ENCODE measurements at regions of chr15 and their contacts with region 1.

Region 1: GRCh38 chr15:41774062-41774881 is at the start of gene MAPKBP1:
- DNase-seq: peak; percentile 94 to 97
- ATAC-seq: peak; percentile 96 to 98
- H3K4me3 ChIP-seq: peak within 1 kb of the TSS; percentile 71 to 91 (median 83)
- H3K27ac ChIP-seq: peak within 1 kb of the TSS; percentile 83 to 87 (median 86)
- H3K4me1 ChIP-seq: peaks cover 28 to 36% of the 10 kb centered on the region in 2 donors
- H3K27me3 ChIP-seq: no peaks in the 10 kb centered on the region
- CTCF ChIP-seq: peak; percentile 38 to 76 (median 60)
- POLR2A ChIP-seq: peak; percentile 49 to 51
- total RNA-seq, gene MAPKBP1: 4.2 to 8.4 (median 5.4) TPM

Region 2: GRCh38 chr15:41230650-41231533 is 543.4 kb before region 1 on chr15 and contains the starts of genes CHP1 and EXD1:
- in situ Hi-C with region 1: no loop called
- intact Hi-C with region 1: loop called (anchors 2 kb)
- DNase-seq: peak; percentile 98 to 99
- ATAC-seq: peak; percentile 91 to 94
- H3K4me3 ChIP-seq: peak within 1 kb of the TSS; percentile 73 to 91 (median 86)
- H3K27ac ChIP-seq: peak within 1 kb of the TSS; percentile 91 to 97 (median 94)
- H3K4me1 ChIP-seq: peaks cover 31 to 35% of the 10 kb centered on the region in 2 donors
- H3K27me3 ChIP-seq: no peaks in the 10 kb centered on the region
- CTCF ChIP-seq: peak; percentile 91 to 98 (median 93)
- POLR2A ChIP-seq: peak; percentile 88 to 90
- total RNA-seq, gene CHP1: 208 to 293 (median 266) TPM
- total RNA-seq, gene EXD1: not detected

Region 3: GRCh38 chr15:41790756-41791546 is 16.7 kb after region 1 on chr15:
- in situ Hi-C with region 1: no loop called
- intact Hi-C with region 1: loop called (anchors 2 kb)
- DNase-seq: no peak
- ATAC-seq: peak; percentile 20 to 32
- H3K4me3 ChIP-seq: no peak overlapping the region
- H3K27ac ChIP-seq: peak overlapping the region; percentile 47 to 77 (median 66)
- H3K4me1 ChIP-seq: peaks cover 47 to 48% of the 10 kb centered on the region in 2 donors
- H3K27me3 ChIP-seq: no peaks in the 10 kb centered on the region
- CTCF ChIP-seq: no peak
- POLR2A ChIP-seq: no peak

Region 4: DNA sequence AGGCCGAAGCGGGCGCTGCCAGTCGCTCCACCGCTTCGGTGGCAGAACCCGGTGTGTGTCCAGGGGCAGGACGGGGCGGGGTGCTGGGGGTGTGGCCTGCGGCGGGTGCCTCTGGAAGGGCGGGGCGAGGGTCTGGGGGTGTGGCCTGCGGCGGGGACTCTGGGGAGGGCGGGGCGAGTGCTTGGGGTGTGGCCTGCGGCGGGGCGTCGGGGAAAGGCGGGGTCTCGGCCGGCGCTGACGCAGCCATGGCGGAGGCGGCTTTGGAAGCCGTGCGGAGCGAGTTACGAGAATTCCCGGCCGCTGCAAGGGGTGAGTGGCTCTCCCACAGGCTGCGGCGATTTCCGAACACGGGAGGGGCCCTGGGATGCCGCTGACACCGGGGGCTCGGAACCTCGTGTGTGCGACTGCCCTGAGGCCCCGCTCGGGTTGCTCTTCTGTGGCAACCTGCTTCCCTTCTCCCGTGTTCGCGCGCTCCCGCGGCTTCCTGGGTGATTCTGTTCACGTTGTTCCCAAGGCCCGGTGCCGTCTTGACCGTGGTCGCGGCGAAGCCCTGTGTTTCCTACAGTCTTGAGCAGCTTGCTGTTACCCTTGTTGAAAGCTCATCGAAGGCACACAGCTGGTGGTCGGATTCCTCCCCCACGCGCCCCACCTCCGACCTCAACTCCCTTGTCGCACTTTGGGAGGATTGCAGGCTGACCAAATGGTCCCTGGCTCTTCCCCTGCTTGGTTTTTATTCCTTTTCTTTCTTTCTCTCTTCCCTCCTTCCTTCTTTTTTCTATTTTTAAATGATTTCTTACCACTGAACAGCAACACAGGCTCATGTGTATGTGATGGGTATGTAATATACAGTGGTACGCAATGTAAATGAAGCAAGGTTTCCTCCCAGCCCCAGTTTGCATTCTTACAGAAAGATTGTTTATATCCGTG is 53.9 kb after region 1 on chr15 and contains the start of gene JMJD7:
- in situ Hi-C with region 1: no loop called
- intact Hi-C with region 1: loop called (anchors 5 kb)
- DNase-seq: peak; percentile 88 to 91
- ATAC-seq: peak; percentile 89
- H3K4me3 ChIP-seq: peak within 1 kb of the TSS; percentile 63 to 90 (median 68)
- H3K27ac ChIP-seq: peak within 1 kb of the TSS; percentile 82 to 90 (median 87)
- H3K4me1 ChIP-seq: peaks cover 15 to 18% of the 10 kb centered on the region in 2 donors
- H3K27me3 ChIP-seq: no peaks in the 10 kb centered on the region
- CTCF ChIP-seq: no peak
- POLR2A ChIP-seq: peak; percentile 72 to 77
- total RNA-seq, gene JMJD7: 1.7 to 7.6 (median 3.9) TPM

Region 5: GRCh38 chr15:41870689-41871081 is 96.4 kb after region 1 on chr15:
- in situ Hi-C with region 1: no loop called
- intact Hi-C with region 1: no loop called
- DNase-seq: no peak
- ATAC-seq: no peak
- H3K4me3 ChIP-seq: no peak overlapping the region
- H3K27ac ChIP-seq: no peak overlapping the region
- H3K4me1 ChIP-seq: no peaks in the 10 kb centered on the region
- H3K27me3 ChIP-seq: no peaks in the 10 kb centered on the region
- CTCF ChIP-seq: no peak
- POLR2A ChIP-seq: no peak

Region 6: DNA sequence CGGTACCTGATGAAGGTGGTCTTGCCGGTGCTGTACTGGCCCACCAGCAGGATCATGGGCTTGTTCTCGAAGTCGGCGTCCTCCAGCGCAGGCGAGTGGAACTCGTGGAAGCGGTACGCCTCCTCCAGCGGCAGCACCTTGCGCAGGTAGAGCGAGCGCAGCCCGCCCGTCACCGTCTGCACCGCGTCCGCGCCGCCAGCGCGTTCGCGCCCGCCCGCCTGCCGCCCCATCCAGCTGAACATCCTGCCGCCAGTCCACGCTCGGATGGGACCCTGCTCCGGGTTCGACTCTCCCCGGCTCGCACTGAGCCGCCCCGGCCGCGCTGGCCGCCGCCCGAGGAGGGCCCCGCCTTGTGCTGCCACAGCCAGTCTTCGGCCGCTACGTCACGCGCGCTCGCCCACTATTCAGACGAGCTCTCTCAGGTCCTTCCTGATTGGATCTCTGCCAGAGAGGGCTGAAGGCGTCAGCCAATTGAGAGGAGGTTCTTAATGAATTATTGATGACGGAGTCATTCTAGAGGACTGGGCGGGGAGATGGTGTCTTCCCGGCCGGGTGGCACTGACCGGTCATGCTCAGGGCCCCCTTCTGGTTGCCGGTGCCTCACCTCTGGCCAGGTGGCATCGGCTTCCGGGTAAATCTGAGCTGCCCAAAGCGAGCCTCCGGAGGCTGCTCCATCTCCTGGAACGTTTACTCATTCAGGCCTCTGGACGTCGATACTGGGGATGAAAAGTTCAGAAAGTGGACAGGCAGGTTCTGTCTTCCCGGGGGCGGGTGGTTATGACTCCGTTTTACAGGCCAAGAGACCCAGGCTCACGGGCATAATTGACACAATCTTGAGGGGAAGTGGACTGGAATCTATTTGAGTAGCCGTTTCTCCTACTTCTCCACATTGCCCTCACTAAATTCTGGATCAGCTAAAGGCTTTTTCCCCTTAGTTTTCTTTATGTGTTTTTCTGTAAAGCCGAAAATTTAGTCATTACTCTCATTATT is 198.3 kb after region 1 on chr15 and contains the start of gene EHD4:
- in situ Hi-C with region 1: no loop called
- intact Hi-C with region 1: loop called (anchors 2 kb)
- DNase-seq: peak; percentile 96 to 97
- ATAC-seq: peak; percentile 93 to 95
- H3K4me3 ChIP-seq: peak within 1 kb of the TSS; percentile 62 to 89 (median 82)
- H3K27ac ChIP-seq: peak within 1 kb of the TSS; percentile 66 to 83 (median 78)
- H3K4me1 ChIP-seq: peaks cover 10 to 36% of the 10 kb centered on the region in 2 donors
- H3K27me3 ChIP-seq: no peaks in the 10 kb centered on the region
- CTCF ChIP-seq: peak in 3 of 5 experiments; percentile 42 to 56 (median 46)
- POLR2A ChIP-seq: peak; percentile 79 to 82
- total RNA-seq, gene EHD4: 3.8 to 7.1 (median 4.3) TPM

Region 7: DNA sequence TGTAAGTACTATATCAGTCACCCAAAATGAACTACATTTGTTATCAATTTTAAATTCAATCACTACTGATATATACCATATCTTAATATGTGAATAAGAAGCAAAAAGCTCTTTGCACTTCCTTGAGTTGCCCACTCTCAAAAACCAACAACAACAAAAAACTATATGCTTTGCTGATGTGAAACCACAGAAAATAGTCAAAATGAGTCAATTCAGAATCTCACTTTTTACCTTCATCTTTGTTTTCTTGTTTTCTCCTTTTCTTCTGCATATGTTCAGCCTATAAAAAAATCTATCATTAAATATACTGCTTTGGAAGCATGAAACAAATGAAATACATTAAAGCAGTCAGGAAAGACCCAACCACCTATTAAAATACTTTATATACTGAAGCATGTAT is 1250.9 kb after region 1 on chr15:
- in situ Hi-C with region 1: no loop called
- intact Hi-C with region 1: no loop called
- DNase-seq: no peak
- ATAC-seq: no peak
- H3K4me3 ChIP-seq: no peak overlapping the region
- H3K27ac ChIP-seq: no peak overlapping the region
- H3K4me1 ChIP-seq: no peaks in the 10 kb centered on the region
- H3K27me3 ChIP-seq: no peaks in the 10 kb centered on the region
- CTCF ChIP-seq: no peak
- POLR2A ChIP-seq: no peak

Measured in gastrocnemius medialis (tissue), 4 donors.